Activated CD4-positive, alpha-beta memory T cell treated with anti-CD3 and anti-CD28 coated beads, Interleukin-2, amount 10 ng/mL, durations not matched to agents 7 days and 5 days (primary cell): ENCODE measurements at regions of chr1 and their contacts with region 1.

Region 1: GRCh38 chr1:35726450-35727433 is 8.1 kb upstream of the C1orf216 start:
- DNase-seq: peak; percentile 50
- H3K4me3 Mint-ChIP-seq: no peak overlapping the region
- H3K27ac Mint-ChIP-seq: no peak overlapping the region
- H3K4me1 Mint-ChIP-seq: no peaks in the 10 kb centered on the region
- H3K27me3 Mint-ChIP-seq: no peaks in the 10 kb centered on the region

Region 2: DNA sequence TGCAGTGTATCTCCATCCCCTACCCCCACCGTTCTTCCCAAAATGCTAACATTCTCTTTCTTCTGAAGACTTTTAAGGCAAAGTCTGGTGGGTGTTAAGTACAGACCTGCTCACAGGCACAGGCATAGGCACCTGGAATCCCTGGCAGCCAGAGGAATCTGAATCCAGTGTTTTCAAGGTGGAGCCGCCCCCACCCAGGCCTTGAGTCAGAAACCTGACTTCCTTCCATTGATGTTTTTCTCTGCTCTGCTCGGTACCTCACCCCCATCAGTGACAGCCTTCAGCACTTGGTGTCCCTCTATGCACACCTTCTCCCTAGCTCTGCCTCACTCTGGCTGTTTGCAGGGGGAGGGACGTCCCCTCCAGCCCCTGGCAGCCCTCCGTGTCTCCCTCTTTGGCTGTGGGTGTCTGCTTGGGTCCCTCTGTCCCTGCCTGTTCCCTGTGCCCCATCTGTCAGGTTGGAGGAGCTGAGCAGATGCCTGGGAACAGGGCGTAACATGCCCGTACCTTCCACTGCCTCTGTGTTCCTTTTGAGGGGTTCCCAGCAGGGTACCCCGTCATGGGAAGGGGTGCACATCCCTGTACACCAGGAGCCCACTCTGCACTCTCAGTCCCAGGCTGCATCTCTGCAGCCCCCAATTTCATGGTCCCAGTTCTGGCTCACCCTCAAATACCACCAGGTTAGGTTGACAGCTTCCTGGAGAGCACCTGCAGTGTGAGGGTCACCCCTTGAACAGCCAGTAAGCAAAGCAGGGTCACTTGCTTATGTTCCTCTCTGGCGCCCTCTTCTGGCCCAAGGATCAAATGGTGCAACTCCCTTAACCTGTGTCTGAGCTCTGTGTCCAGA is 162.5 kb before region 1 on chr1:
- CTCF ChIA-PET with region 1: interaction called, 30 read pairs
- POLR2A ChIA-PET with region 1: interaction called, 6 read pairs
- DNase-seq: peak; percentile 85
- H3K4me3 Mint-ChIP-seq: no peak overlapping the region
- H3K27ac Mint-ChIP-seq: no peak overlapping the region
- H3K4me1 Mint-ChIP-seq: peaks cover 22% of the 10 kb centered on the region
- H3K27me3 Mint-ChIP-seq: no peaks in the 10 kb centered on the region

Region 3: DNA sequence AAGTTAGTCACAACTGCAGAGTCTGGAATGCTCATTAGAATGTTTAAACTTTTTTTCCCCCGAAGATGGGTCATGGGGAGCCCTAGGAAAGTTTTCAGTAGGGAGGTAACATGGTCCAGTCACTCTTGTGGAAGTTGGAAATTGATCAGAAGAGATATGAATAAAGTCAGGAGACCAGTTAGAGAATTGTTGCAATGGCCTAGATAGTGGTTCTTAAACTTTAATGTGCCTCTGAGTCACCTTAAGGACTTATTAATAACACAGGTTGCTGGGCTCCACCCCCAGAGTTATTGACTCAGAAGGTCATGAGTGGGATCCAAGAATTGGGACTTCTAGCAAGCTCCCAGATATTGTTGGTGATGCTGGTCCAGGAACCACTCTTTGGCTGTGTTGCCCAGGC is 156.8 kb before region 1 on chr1:
- CTCF ChIA-PET with region 1: interaction called, 30 read pairs
- POLR2A ChIA-PET with region 1: interaction called, 6 read pairs
- DNase-seq: no peak
- H3K4me3 Mint-ChIP-seq: no peak overlapping the region
- H3K27ac Mint-ChIP-seq: no peak overlapping the region
- H3K4me1 Mint-ChIP-seq: peaks cover 6% of the 10 kb centered on the region
- H3K27me3 Mint-ChIP-seq: peaks cover 24% of the 10 kb centered on the region

Region 4: DNA sequence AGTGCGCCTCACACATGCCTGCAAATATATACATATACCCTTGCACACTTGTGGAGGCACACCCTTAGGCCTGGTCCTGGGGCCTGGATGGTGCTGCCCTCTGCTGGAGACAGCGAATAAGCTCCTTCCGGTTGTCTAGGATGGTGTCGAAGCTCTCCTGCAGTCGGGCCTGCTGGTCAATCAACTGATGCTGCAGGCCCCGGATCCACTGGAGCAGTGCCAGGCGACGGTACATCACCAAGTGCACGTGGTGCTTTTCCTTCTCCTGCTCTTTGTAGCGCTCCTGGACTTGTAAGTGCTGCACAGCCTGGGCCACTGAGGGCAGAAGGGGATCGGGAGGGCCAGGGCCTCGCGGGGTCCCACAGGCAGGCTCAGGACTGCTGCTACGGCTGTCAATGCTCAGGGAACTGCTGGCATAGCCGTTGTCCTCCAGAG is 11.2 kb before region 1 on chr1:
- CTCF ChIA-PET with region 1: interaction called, 92 read pairs
- POLR2A ChIA-PET with region 1: interaction called, 3 read pairs
- DNase-seq: peak; percentile 83
- H3K4me3 Mint-ChIP-seq: no peak overlapping the region
- H3K27ac Mint-ChIP-seq: peak overlapping the region; percentile 51
- H3K4me1 Mint-ChIP-seq: peaks cover 31% of the 10 kb centered on the region
- H3K27me3 Mint-ChIP-seq: no peaks in the 10 kb centered on the region

Region 5: GRCh38 chr1:35737120-35737519 is 10.4 kb after region 1 on chr1:
- CTCF ChIA-PET with region 1: interaction called, 22 read pairs
- POLR2A ChIA-PET with region 1: no interaction called
- DNase-seq: no peak
- H3K4me3 Mint-ChIP-seq: no peak overlapping the region
- H3K27ac Mint-ChIP-seq: no peak overlapping the region
- H3K4me1 Mint-ChIP-seq: no peaks in the 10 kb centered on the region
- H3K27me3 Mint-ChIP-seq: no peaks in the 10 kb centered on the region

Region 6: GRCh38 chr1:35747938-35748702 is 21.4 kb after region 1 on chr1:
- CTCF ChIA-PET with region 1: interaction called, 13 read pairs
- POLR2A ChIA-PET with region 1: no interaction called
- DNase-seq: no peak
- H3K4me3 Mint-ChIP-seq: no peak overlapping the region
- H3K27ac Mint-ChIP-seq: no peak overlapping the region
- H3K4me1 Mint-ChIP-seq: no peaks in the 10 kb centered on the region
- H3K27me3 Mint-ChIP-seq: no peaks in the 10 kb centered on the region

Region 7: DNA sequence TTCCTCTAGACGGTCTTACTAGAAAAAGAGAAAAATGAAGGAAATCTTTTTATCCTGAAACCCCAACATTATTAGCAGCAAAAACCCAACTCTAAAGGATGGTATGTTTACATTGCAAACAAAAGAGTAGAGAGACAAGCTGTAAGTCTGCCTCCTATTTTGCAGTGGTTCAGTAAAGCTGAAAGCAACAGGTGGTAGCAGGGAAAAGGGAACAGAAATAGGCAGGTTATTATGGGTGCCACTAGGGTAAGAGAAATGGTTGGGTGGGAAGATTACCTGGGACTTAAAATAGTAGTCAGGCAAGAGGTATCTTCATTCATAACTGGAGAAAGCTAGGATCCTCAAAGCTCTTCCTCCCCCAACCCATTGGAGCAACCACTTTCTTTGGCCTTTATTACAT is 29.3 kb after region 1 on chr1:
- CTCF ChIA-PET with region 1: interaction called, 10 read pairs
- POLR2A ChIA-PET with region 1: no interaction called
- DNase-seq: no peak
- H3K4me3 Mint-ChIP-seq: no peak overlapping the region
- H3K27ac Mint-ChIP-seq: no peak overlapping the region
- H3K4me1 Mint-ChIP-seq: peaks cover 8% of the 10 kb centered on the region
- H3K27me3 Mint-ChIP-seq: no peaks in the 10 kb centered on the region